Adrenal gland (tissue), 19 donors: ENCODE measurements at regions of chr21 and their contacts with region 1.

Region 1: DNA sequence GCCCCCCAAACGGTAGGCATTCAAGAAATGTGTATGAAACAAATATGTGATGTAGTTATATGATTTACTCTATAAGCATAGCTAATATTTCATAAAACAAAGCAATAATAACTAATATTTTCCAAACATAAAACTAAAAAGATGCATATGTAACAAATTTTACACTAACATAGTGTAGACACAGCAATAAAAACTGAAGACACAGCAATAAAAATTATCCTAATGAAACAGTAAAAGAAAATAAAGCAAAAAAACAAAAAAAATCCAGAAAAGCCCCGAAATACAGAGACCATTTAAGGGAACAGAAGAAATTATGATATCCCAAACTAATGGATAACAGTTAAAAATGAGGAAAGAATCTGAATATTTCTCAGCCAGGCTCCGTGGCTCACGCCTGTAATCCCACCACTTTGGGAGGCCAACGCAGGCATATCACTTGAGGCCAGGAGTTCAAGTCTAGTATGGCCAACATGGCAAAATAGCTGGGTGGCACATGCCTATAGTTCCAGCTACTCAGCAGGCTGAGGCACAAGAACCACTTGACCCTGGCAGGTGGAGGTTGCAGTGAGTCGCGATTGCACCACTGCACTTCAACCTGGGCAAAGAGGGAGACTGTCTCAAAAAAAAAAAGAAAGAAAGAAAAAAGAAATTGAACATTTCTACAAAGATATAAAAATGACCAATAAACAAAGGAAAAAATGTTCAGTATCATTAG is 38.2 kb upstream of the PSMG1 start:
- DNase-seq: no peak
- H3K4me3 ChIP-seq: no peak overlapping the region
- H3K27ac ChIP-seq: no peak overlapping the region
- H3K4me1 ChIP-seq: no peaks in the 10 kb centered on the region
- H3K27me3 ChIP-seq: no peaks in the 10 kb centered on the region
- CTCF ChIP-seq: no peak
- POLR2A ChIP-seq: no peak

Region 2: GRCh38 chr21:38958940-38959691 is 262.3 kb before region 1 on chr21:
- intact Hi-C with region 1: no loop called
- DNase-seq: peak in 6 of 7 donors; percentile 17 to 73 (median 27)
- H3K4me3 ChIP-seq: no peak overlapping the region
- H3K27ac ChIP-seq: peak overlapping the region in 4 of 5 donors; percentile 1 to 86 (median 64)
- H3K4me1 ChIP-seq: peaks cover 0 to 12% of the 10 kb centered on the region in 2 donors
- H3K27me3 ChIP-seq: no peaks in the 10 kb centered on the region
- CTCF ChIP-seq: no peak
- POLR2A ChIP-seq: no peak

Region 3: GRCh38 chr21:39269620-39270019 is 48.2 kb after region 1 on chr21:
- intact Hi-C with region 1: loop called in 1 of 2 experiments (anchors 10 kb)
- DNase-seq: no peak
- H3K4me3 ChIP-seq: no peak overlapping the region
- H3K27ac ChIP-seq: no peak overlapping the region
- H3K4me1 ChIP-seq: no peaks in the 10 kb centered on the region
- H3K27me3 ChIP-seq: no peaks in the 10 kb centered on the region
- CTCF ChIP-seq: no peak
- POLR2A ChIP-seq: no peak

Region 4: DNA sequence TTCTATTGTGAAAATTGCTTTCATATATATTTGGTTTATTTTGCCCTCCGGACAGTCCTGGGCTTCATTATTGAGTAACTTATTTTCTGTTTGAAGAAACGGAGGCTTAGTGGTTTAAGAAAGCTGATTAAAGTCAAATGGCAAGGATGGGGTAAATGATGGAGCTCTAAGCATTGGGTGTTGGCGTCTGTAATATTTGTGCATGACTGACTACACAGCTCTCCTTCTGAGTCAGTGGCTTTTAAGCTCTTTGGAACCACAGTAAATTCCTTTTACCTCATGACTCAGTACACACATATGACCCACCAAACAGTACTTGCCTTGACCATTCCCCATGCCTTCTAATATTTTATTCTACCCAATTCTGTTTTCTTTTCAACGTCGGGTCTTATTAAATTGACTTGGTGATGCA is 412.3 kb after region 1 on chr21:
- intact Hi-C with region 1: no loop called
- DNase-seq: no peak
- H3K4me3 ChIP-seq: no peak overlapping the region
- H3K27ac ChIP-seq: no peak overlapping the region
- H3K4me1 ChIP-seq: no peaks in the 10 kb centered on the region
- H3K27me3 ChIP-seq: peaks cover 5% of the 10 kb centered on the region
- CTCF ChIP-seq: no peak
- POLR2A ChIP-seq: no peak